BJ (cell line): ENCODE measurements at regions of chr15 and their contacts with region 1.

Region 1: GRCh38 chr15:57732526-57733331 is 26.2 kb downstream of the POLR2M start:
- DNase-seq: no peak
- H3K4me3 ChIP-seq: no peak overlapping the region
- H3K27me3 ChIP-seq: no peaks in the 10 kb centered on the region
- CTCF ChIP-seq: peak; percentile 81

Region 2: GRCh38 chr15:57706405-57707209 is 26.1 kb before region 1 on chr15 and contains the start of gene POLR2M:
- CTCF ChIA-PET with region 1: interaction called, 15 read pairs
- POLR2A ChIA-PET with region 1: no interaction called
- DNase-seq: peak; percentile 89
- H3K4me3 ChIP-seq: peak within 1 kb of the TSS; percentile 82
- H3K27me3 ChIP-seq: no peaks in the 10 kb centered on the region
- CTCF ChIP-seq: no peak
- polyA plus RNA-seq, gene POLR2M: 87.2 and 126 TPM in 2 replicates

Region 3: GRCh38 chr15:57720867-57721266 is 11.9 kb before region 1 on chr15:
- CTCF ChIA-PET with region 1: interaction called, 28 read pairs
- POLR2A ChIA-PET with region 1: no interaction called
- DNase-seq: no peak
- H3K4me3 ChIP-seq: no peak overlapping the region
- H3K27me3 ChIP-seq: no peaks in the 10 kb centered on the region
- CTCF ChIP-seq: no peak